SK-N-SH (cell line): ENCODE measurements at regions of chr17 and their contacts with region 1.

Region 1: GRCh38 chr17:43393944-43394482 is 4.8 kb upstream of the ARL4D start:
- DNase-seq: peak; percentile 87
- H3K4me3 ChIP-seq: no peak overlapping the region; a peak in 1 of 4 replicates
- H3K27ac ChIP-seq: no peak overlapping the region
- H3K4me1 ChIP-seq: peaks cover 0 to 4% of the 10 kb centered on the region in 2 experiments; a peak in 1 of 4 replicates
- H3K27me3 ChIP-seq: no peaks in the 10 kb centered on the region
- CTCF ChIP-seq: peak; percentile 92
- EP300 ChIP-seq: no peak
- RAD21 ChIP-seq: peak; percentile 98

Region 2: DNA sequence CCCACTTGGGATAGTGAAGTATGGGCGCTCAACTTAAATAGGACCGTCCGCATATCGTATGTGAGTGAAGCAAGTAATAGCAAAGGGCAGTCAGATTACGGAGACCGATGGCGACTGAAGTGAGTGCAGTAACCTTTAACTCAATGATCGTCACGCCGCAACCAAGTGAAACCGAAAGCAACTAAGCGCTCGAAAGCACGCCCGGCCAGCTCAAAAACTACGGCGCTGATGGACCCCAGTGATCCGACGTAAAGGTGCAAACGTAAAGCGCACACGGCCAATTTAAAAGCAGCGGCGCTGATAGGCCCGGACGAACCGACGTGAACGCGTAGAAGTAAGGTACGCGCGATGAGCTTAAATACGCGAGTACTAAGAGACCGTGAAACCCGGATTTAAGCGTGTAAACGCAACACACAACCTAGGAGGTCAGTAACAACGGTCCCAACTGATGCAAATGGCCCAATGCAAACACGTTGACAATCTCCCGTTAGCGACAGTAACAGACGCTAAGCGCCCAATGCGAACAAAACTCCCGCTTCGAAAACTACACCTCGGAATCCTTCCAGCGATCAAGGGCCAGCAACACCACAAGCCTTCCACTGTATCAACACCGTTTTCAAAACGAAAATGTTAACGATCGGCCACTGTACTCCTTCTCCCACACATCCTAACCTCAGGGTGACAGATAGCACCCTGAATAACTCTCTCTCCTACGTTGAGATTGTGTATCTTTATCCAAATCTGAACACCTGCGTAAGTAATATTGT is 33.1 kb before region 1 on chr17:
- CTCF ChIA-PET with region 1: interaction called, 6 read pairs
- POLR2A ChIA-PET with region 1: interaction called, 54 read pairs
- DNase-seq: peak; percentile 78
- H3K4me3 ChIP-seq: peak overlapping the region; percentile 56 to 59
- H3K27ac ChIP-seq: peak overlapping the region; percentile 91 to 98
- H3K4me1 ChIP-seq: peaks cover 9 to 16% of the 10 kb centered on the region in 2 experiments; a peak in 3 of 4 replicates
- H3K27me3 ChIP-seq: no peaks in the 10 kb centered on the region
- CTCF ChIP-seq: no peak
- EP300 ChIP-seq: peak; percentile 13 to 58; a peak in 2 of 4 replicates
- RAD21 ChIP-seq: no peak

Region 3: DNA sequence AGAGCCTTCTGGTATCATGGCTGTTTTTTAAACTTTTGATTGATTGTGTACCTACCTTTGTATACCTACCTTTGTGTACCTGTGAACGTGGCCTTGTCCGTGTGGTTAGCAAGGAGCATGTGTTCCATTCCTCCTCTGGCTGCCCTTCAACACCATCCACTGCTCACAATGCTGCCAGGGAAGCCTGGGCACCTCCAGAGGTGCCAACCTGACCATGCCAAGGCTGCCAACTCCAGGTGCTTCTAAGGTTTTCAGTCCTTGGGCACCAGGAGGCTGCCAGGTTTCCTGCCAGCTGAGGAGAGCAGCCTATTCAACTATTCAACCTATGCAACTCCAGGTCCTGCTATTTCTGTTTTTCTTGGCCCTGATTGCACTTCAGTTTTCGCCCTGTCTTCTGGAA is 12.8 kb before region 1 on chr17:
- CTCF ChIA-PET with region 1: interaction called, 13 read pairs
- POLR2A ChIA-PET with region 1: no interaction called
- DNase-seq: no peak
- H3K4me3 ChIP-seq: no peak overlapping the region
- H3K27ac ChIP-seq: no peak overlapping the region
- H3K4me1 ChIP-seq: no peaks in the 10 kb centered on the region
- H3K27me3 ChIP-seq: no peaks in the 10 kb centered on the region
- CTCF ChIP-seq: no peak
- EP300 ChIP-seq: no peak
- RAD21 ChIP-seq: no peak

Region 4: DNA sequence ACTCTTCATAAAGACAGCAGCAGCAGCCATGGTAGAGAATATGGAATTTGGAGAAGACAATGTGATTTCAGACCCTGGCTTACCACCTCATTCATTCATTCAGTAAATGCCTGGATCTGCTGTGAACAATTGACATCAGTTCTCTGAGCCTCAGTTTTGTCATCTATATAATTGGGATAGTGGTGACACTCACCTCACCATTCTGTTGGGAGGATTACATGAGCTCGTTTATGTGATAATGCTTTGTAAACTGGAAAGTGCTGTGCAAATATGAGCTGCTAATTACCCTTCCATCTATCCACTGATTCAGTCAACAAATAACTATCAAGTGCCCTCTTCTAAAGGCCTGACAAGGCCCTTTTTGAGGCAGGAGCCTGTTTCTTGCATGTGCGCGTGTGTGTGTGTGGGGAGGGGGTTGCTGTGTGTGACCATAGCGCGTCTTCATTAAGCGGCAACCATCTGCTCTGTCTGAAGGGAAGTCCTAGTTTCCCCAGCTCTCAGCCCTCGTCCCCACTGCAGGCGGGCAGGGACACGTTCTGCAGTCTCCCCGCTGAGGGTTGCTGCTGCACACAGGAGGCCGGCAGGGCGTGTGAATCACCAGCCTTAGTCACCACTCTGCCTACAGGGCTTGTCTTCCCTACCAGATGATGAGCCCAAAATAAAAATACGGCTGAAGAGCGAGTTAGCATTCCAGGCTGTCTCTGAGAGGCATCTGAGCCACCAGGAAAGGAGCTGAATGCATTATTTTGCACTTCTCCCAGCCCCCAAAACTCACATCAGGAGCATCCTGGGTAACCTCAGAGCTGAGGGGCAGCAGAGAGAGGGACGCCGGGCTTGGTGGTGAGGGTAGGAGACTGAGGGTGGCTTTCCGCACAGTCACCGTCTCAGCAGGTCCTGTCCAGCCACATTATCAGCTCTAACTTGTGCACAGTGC is 24.7 kb after region 1 on chr17:
- CTCF ChIA-PET with region 1: interaction called, 33 read pairs
- POLR2A ChIA-PET with region 1: interaction called, 4 read pairs
- DNase-seq: no peak
- H3K4me3 ChIP-seq: peak overlapping the region in 1 of 2 experiments; percentile 38; a peak in 2 of 4 replicates
- H3K27ac ChIP-seq: peak overlapping the region; percentile 64 to 89
- H3K4me1 ChIP-seq: peaks cover 11 to 18% of the 10 kb centered on the region in 2 experiments; a peak in 3 of 4 replicates
- H3K27me3 ChIP-seq: no peaks in the 10 kb centered on the region
- CTCF ChIP-seq: no peak
- EP300 ChIP-seq: peak in 1 of 2 experiments; percentile 54; a peak in 1 of 4 replicates
- RAD21 ChIP-seq: no peak

Region 5: GRCh38 chr17:43467981-43468581 is 74.1 kb after region 1 on chr17:
- CTCF ChIA-PET with region 1: interaction called, 20 read pairs
- POLR2A ChIA-PET with region 1: interaction called, 3 read pairs
- DNase-seq: no peak
- H3K4me3 ChIP-seq: no peak overlapping the region
- H3K27ac ChIP-seq: peak overlapping the region; percentile 36 to 93; a peak in 3 of 4 replicates
- H3K4me1 ChIP-seq: peaks cover 4% of the 10 kb centered on the region in 2 experiments; a peak in 2 of 4 replicates
- H3K27me3 ChIP-seq: no peaks in the 10 kb centered on the region
- CTCF ChIP-seq: no peak
- EP300 ChIP-seq: peak in 1 of 2 experiments; percentile 84; a peak in 2 of 4 replicates
- RAD21 ChIP-seq: no peak

Region 6: DNA sequence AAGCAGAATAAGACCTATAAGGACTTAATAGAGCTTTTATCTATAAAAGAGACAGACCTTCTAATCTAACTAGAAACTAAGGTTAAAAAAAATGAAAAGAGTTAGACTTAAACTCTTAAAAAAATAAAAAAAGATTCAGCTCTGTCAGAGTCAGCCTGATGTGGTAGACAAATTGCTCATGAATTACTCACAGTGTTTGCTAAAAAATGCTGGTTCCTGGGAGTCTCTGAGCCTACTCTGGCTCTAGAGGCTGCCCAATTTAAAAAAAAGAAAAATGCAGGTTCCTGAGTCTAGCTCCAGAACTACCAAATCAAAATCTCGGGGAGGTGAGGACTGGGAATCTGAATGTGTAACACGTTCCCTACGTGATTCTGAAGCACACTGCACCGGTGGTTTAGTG is 346.5 kb after region 1 on chr17:
- CTCF ChIA-PET with region 1: no interaction called
- POLR2A ChIA-PET with region 1: no interaction called
- DNase-seq: no peak
- H3K4me3 ChIP-seq: no peak overlapping the region
- H3K27ac ChIP-seq: peak overlapping the region in 1 of 2 experiments; percentile 61; a peak in 2 of 4 replicates
- H3K4me1 ChIP-seq: 0 out of 4 replicates have a peak, but pooled peaks cover 0 to 3% of the 10 kb centered on the region in 2 experiments
- H3K27me3 ChIP-seq: no peaks in the 10 kb centered on the region
- CTCF ChIP-seq: no peak
- EP300 ChIP-seq: no peak
- RAD21 ChIP-seq: no peak